ENCODE measurements at regions of chr1 and their contacts with region 1.

Region 1: DNA sequence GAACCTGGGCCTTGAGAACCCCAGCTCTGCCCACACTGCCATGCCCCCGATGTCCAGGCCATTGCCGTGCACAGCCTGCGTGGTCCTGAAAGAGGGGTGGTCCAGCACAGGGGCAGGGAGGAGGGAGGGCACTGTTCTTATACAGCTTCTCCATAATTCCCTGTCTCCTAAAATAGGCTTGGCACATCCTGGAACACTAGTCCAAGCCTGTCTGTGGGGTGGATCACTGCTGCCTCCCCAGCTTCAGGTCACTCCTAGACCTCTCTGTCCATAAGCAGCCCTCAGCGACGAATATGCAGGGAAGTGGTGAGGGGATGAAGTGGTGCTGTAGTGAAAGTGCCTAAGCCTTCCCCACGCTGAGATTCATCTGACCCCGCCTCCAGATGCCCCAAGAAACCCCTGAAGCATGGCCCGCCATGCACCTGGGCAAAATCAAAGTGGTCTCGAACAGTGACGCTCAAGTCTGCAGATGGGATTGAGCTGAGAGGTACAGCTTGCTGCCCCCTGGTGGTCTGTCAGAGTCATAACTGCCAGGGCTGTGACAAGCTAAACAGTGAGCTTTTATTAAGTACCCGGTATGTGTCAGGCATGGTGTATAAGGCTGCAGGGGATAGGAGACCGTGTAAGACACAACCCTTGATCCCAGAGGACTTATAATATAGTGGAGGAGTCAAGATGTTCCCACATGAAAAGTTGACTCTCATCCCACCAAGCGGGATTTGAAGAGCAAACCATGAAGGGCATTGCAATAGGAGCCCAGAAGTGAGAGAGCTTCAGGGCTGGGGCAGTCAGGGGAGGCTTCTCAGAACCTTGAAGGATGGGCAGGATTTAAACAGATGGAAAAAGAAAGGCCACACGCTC is 66.6 kb downstream of the FAM163A start:
- DNase-seq: peak; percentile 78
- H3K4me3 ChIP-seq: no peak overlapping the region
- H3K27ac ChIP-seq: no peak overlapping the region
- H3K4me1 ChIP-seq: no peaks in the 10 kb centered on the region
- H3K27me3 ChIP-seq: peaks cover 22% of the 10 kb centered on the region
- CTCF ChIP-seq: peak; percentile 94

Region 2: DNA sequence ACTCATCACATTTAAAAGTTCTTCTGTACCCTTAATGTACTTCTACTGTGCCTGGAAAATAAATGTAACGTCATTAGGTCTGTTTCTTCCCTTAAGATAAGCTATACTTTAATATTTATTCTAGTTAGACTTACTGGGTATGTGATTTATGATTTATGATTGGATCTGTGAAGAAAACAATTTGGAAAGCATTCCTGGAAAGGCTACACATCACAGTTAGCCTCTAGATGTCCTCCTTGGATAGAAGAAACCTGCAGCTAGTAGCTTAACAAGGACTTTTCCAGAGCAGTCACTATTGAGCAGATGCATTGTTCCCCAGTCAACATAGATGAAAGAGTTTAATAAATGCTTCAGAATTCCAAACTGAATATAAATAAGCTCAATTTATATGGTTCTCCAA is 558.1 kb before region 1 on chr1:
- CTCF ChIA-PET with region 1: interaction called, 5 read pairs
- POLR2A ChIA-PET with region 1: no interaction called
- intact Hi-C with region 1: loop called (anchors 5 kb)
- DNase-seq: peak; percentile 48
- H3K4me3 ChIP-seq: no peak overlapping the region
- H3K27ac ChIP-seq: no peak overlapping the region
- H3K4me1 ChIP-seq: no peaks in the 10 kb centered on the region
- H3K27me3 ChIP-seq: no peaks in the 10 kb centered on the region
- CTCF ChIP-seq: peak; percentile 59

Region 3: DNA sequence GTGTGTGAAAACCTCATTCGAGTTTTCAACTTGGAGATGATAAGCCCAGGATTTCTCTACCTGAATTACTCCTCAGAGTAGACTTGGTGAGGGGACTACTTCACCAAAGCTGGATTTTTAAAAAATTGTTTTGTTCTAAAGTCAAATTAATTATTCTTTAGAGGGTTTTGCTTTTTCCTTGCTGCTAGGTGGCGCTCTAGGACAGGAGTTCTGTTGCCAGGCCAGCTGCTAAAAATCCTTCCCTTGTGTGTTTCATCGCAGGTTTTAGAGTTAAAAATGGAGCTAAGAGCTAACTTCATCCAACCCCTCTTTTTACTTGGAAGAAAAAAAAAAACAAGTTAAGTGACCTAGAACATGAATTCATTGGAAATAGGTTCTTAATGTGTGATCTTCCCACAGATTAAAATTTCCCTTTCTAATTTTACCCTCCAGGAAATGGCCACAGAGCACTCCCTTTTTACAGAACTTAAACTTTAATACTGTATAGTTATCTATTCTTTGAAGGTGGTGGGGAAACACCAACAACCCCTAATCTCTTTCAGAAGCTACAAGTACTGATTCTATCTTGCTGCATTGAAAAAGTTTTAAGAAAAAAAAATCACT is 103.3 kb before region 1 on chr1:
- CTCF ChIA-PET with region 1: interaction called, 102 read pairs
- POLR2A ChIA-PET with region 1: interaction called, 5 read pairs
- intact Hi-C with region 1: loop called (anchors 1 kb)
- DNase-seq: peak; percentile 75
- H3K4me3 ChIP-seq: no peak overlapping the region
- H3K27ac ChIP-seq: no peak overlapping the region
- H3K4me1 ChIP-seq: no peaks in the 10 kb centered on the region
- H3K27me3 ChIP-seq: no peaks in the 10 kb centered on the region
- CTCF ChIP-seq: peak; percentile 88

Region 4: DNA sequence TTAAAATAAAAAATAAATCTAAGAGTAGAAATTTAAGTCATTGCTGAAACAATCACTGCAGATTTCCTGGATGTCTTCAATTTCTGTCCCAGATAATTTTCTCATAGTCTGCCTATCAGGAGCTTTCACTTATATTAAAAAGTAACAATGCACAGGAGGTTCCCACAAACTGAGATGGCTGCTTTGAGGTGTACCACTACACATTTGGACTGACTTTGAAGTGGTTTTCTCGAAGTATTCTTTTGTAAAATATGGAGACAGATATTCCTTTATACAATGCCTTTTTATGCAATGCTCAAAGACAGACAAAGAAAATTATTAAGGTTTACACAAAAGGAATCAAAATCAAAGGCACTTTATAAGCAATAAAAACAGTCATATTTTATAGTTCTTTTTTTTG is 43.4 kb after region 1 on chr1:
- CTCF ChIA-PET with region 1: interaction called, 12 read pairs
- POLR2A ChIA-PET with region 1: no interaction called
- intact Hi-C with region 1: no loop called
- DNase-seq: no peak
- H3K4me3 ChIP-seq: no peak overlapping the region
- H3K27ac ChIP-seq: no peak overlapping the region
- H3K4me1 ChIP-seq: no peaks in the 10 kb centered on the region
- H3K27me3 ChIP-seq: no peaks in the 10 kb centered on the region
- CTCF ChIP-seq: no peak

Region 5: DNA sequence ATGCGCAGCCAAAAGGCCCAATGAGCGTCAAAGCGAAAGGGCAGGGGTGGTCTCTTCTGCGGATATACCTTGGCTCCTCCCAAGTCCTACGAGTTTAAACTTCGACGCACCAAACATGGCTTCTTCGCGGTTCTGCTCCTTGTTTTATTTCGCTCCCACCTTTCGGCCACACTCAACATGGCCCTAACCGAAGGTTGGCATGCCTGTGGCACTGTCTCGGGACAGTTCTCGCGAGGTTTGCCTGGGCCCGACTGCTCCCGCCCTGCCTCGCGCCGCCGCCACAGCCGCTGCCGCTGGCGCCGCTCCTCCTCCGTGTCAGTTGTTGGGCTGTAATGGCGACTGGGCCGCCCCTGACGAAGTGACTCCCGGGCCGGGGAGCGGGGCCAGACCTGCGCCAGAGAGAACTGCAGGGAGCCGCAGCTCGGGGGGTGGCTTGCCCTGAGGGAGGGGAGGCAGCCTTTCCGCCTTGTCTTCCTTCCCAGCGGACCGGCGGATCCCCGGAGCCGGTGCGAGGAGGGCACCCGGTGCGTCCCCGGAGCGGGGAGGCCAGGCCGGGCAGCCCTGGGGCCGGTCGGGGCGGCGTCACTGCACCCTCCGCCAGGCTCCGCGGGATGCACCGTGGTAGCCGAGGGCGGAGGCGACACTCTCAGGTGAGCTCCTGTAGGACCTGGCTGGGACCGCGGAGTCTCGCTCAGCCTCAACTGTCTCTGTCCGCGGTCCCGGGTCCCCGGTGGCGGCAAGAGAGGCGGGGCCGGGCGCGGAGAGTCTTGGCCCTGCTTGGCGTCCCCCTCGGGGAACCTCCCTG is 145.0 kb after region 1 on chr1 and contains the start of gene CEP350:
- CTCF ChIA-PET with region 1: no interaction called
- POLR2A ChIA-PET with region 1: no interaction called
- intact Hi-C with region 1: no loop called
- DNase-seq: peak; percentile 99
- H3K4me3 ChIP-seq: peak within 1 kb of the TSS; percentile 97
- H3K27ac ChIP-seq: peak within 1 kb of the TSS; percentile 96
- H3K4me1 ChIP-seq: peaks cover 27% of the 10 kb centered on the region
- H3K27me3 ChIP-seq: no peaks in the 10 kb centered on the region
- CTCF ChIP-seq: no peak
- total RNA-seq, gene CEP350: 39.2 and 42.2 TPM in 2 replicates

Region 6: GRCh38 chr1:179996099-179996498 is 186.4 kb after region 1 on chr1:
- CTCF ChIA-PET with region 1: no interaction called
- POLR2A ChIA-PET with region 1: no interaction called
- intact Hi-C with region 1: no loop called
- DNase-seq: no peak
- H3K4me3 ChIP-seq: no peak overlapping the region
- H3K27ac ChIP-seq: no peak overlapping the region
- H3K4me1 ChIP-seq: no peaks in the 10 kb centered on the region
- H3K27me3 ChIP-seq: no peaks in the 10 kb centered on the region
- CTCF ChIP-seq: no peak